GM12878 (cell line): ENCODE measurements at regions of chr15 and their contacts with region 1.

Region 1: DNA sequence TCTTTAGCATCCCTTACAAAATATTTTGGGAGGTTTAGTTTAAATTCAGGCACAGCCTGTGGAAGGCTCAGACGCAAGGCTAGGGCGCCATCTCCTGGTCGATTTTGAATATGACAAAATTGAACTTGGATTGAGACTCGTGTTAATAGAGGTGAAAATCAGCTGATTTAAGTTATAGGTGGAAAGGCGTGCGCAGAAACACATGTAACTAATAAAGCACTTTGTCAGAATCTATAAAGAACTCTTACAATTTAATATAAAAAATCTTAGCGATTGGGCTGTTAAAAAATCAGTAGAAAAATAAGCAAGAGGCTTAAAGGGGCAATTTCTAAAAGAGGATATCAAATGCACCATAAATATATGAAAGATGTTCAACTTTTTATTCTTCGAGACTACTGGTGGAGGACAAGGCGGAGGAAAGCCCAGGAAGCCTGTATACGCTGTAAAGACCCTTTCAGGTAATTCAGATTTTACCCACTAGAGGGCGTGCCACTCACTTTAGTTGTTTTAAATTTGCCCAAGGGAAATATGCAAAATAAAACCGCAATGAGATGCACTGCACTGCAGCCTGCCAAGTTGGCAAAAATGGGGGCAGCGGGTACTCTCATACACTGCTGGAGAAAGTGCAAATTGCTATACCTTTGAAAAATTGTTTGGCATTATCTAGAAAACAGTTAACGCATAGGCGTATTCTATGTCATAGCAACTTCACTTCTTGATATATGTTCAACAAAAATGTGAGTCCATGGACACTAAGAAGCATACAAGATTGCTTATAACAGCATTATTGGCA is 64.7 kb downstream of the SLC30A4 start:
- DNase-seq: peak; percentile 69
- ATAC-seq: peak; percentile 72
- H3K4me3 ChIP-seq: peak overlapping the region; percentile 69
- H3K27ac ChIP-seq: peak overlapping the region; percentile 30
- H3K4me1 ChIP-seq: peaks cover 24% of the 10 kb centered on the region
- H3K27me3 ChIP-seq: no peaks in the 10 kb centered on the region
- CTCF ChIP-seq: peak; percentile 57 to 87 (median 62); a peak in 5 of 6 replicates
- EP300 ChIP-seq: no peak
- POLR2A ChIP-seq: no peak
- RAD21 ChIP-seq: peak; percentile 95

Region 2: DNA sequence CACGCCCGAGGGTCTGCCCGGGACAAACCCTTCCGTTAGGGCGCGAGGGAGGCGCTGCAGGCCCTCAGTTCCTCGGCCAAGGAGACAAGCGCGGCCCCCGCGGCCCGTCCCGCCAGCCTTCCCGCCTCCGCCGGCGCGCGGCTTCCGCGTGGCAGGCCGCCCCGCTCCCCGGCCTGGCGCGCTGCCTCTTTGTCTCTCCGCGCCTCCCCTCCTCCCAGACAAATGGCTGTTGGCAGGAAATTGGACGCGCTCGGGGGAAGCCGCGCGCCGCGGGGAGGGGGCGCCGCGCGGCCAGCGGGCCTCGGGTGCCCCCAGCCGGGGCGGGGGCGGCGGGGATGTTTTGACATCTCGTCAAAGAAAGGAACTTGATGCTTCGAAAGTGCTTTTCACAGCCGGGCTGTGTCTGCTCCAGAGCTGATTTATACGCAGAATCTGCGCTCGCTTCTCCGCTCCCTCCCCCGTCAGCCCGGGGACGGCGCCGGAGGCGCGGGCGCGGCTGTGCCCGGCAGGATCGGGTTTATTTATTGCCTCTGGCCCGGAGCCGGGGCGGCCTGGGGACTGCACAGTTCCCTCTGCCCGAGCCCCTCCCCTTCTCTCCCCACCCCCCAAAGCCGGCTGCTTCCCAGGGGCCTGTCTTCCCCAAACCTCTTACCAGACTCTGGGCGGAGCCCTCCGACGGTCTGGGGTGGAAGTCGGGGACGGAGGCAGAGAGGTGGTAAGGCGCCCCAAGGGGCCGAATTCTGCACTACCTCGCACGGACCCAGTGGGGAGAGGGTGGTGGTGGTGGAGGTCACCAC is 290.8 kb before region 1 on chr15:
- CTCF ChIA-PET with region 1: interaction called, 34 read pairs
- POLR2A ChIA-PET with region 1: no interaction called
- RAD21 ChIA-PET with region 1: interaction called, 7 read pairs
- SMC1A ChIA-PET with region 1: interaction called, 22 read pairs
- in situ Hi-C with region 1: no loop called
- intact Hi-C with region 1: loop called (anchors 2 kb)
- DNase-seq: peak; percentile 51
- ATAC-seq: peak; percentile 95
- H3K4me3 ChIP-seq: peak overlapping the region; percentile 79
- H3K27ac ChIP-seq: peak overlapping the region; percentile 40
- H3K4me1 ChIP-seq: peaks cover 12% of the 10 kb centered on the region
- H3K27me3 ChIP-seq: no peaks in the 10 kb centered on the region
- CTCF ChIP-seq: peak; percentile 79 to 87 (median 83); a peak in 5 of 6 replicates
- EP300 ChIP-seq: no peak
- POLR2A ChIP-seq: peak; percentile 75
- RAD21 ChIP-seq: peak; percentile 41

Region 3: GRCh38 chr15:45230246-45230965 is 227.4 kb before region 1 on chr15:
- CTCF ChIA-PET with region 1: no interaction called
- POLR2A ChIA-PET with region 1: no interaction called
- RAD21 ChIA-PET with region 1: no interaction called
- SMC1A ChIA-PET with region 1: no interaction called
- in situ Hi-C with region 1: no loop called
- intact Hi-C with region 1: no loop called
- DNase-seq: no peak
- ATAC-seq: no peak
- H3K4me3 ChIP-seq: no peak overlapping the region
- H3K27ac ChIP-seq: no peak overlapping the region
- H3K4me1 ChIP-seq: no peaks in the 10 kb centered on the region
- H3K27me3 ChIP-seq: no peaks in the 10 kb centered on the region
- CTCF ChIP-seq: no peak
- EP300 ChIP-seq: no peak
- POLR2A ChIP-seq: no peak
- RAD21 ChIP-seq: no peak

Region 4: GRCh38 chr15:45253330-45253729 is 204.5 kb before region 1 on chr15:
- CTCF ChIA-PET with region 1: no interaction called
- POLR2A ChIA-PET with region 1: no interaction called
- RAD21 ChIA-PET with region 1: no interaction called
- SMC1A ChIA-PET with region 1: no interaction called
- in situ Hi-C with region 1: no loop called
- intact Hi-C with region 1: no loop called
- DNase-seq: no peak
- ATAC-seq: peak; percentile 59
- H3K4me3 ChIP-seq: no peak overlapping the region
- H3K27ac ChIP-seq: no peak overlapping the region
- H3K4me1 ChIP-seq: no peaks in the 10 kb centered on the region
- H3K27me3 ChIP-seq: no peaks in the 10 kb centered on the region
- CTCF ChIP-seq: 0 out of 6 replicates have a peak, but pooled peaks of 2 of the 3 experiments have one; percentile 17 to 26
- EP300 ChIP-seq: no peak
- POLR2A ChIP-seq: no peak
- RAD21 ChIP-seq: no peak

Region 5: GRCh38 chr15:45307230-45307924 is 150.5 kb before region 1 on chr15:
- CTCF ChIA-PET with region 1: interaction called, 8 read pairs
- POLR2A ChIA-PET with region 1: no interaction called
- RAD21 ChIA-PET with region 1: no interaction called
- SMC1A ChIA-PET with region 1: no interaction called
- in situ Hi-C with region 1: no loop called
- intact Hi-C with region 1: loop called (anchors 2 kb)
- DNase-seq: peak; percentile 31
- ATAC-seq: peak; percentile 71
- H3K4me3 ChIP-seq: peak overlapping the region; percentile 60; the same call in 1 of the 2 replicates
- H3K27ac ChIP-seq: no peak overlapping the region
- H3K4me1 ChIP-seq: no peaks in the 10 kb centered on the region
- H3K27me3 ChIP-seq: no peaks in the 10 kb centered on the region
- CTCF ChIP-seq: peak; percentile 39 to 65 (median 58); a peak in 5 of 6 replicates
- EP300 ChIP-seq: no peak
- POLR2A ChIP-seq: no peak
- RAD21 ChIP-seq: peak; percentile 58

Region 6: DNA sequence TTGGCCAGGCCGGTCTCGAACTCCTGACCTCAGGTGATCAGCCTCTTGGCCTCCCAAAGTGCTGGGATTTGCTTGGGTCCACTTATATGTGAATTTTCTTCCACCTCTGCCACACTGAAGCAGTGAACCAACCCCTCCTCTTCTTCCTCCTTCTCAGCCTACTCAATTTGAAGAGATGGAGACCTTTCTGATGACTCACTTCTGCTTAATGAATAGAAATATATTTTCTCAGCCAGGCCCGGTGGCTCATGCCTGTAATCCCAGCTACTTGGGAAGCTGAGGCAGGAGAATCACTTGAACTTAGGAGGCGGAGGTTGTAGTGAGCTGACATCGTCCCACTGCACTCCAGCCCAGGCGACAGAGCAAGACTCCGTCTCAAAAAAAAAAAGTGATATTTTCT is 32.7 kb before region 1 on chr15:
- CTCF ChIA-PET with region 1: interaction called, 194 read pairs
- POLR2A ChIA-PET with region 1: no interaction called
- RAD21 ChIA-PET with region 1: interaction called, 38 read pairs
- SMC1A ChIA-PET with region 1: interaction called, 30 read pairs
- in situ Hi-C with region 1: no loop called
- intact Hi-C with region 1: loop called (anchors 1 kb)
- DNase-seq: no peak
- ATAC-seq: no peak
- H3K4me3 ChIP-seq: no peak overlapping the region
- H3K27ac ChIP-seq: no peak overlapping the region
- H3K4me1 ChIP-seq: 0 out of 2 replicates have a peak, but pooled peaks cover 3% of the 10 kb centered on the region
- H3K27me3 ChIP-seq: no peaks in the 10 kb centered on the region
- CTCF ChIP-seq: no peak
- EP300 ChIP-seq: no peak
- POLR2A ChIP-seq: no peak
- RAD21 ChIP-seq: no peak

Region 7: GRCh38 chr15:45587095-45587860 is 129.4 kb after region 1 on chr15 and contains the start of gene BLOC1S6:
- CTCF ChIA-PET with region 1: interaction called, 37 read pairs
- POLR2A ChIA-PET with region 1: interaction called, 4 read pairs
- RAD21 ChIA-PET with region 1: interaction called, 11 read pairs
- SMC1A ChIA-PET with region 1: interaction called, 11 read pairs
- in situ Hi-C with region 1: no loop called
- intact Hi-C with region 1: no loop called
- DNase-seq: peak; percentile 74
- ATAC-seq: peak; percentile 93
- H3K4me3 ChIP-seq: peak within 1 kb of the TSS; percentile 97
- H3K27ac ChIP-seq: peak within 1 kb of the TSS; percentile 85
- H3K4me1 ChIP-seq: peaks cover 4% of the 10 kb centered on the region; the same call in 1 of the 2 replicates
- H3K27me3 ChIP-seq: no peaks in the 10 kb centered on the region
- CTCF ChIP-seq: no peak
- EP300 ChIP-seq: peak in 1 of 2 experiments; percentile 10; a peak in 1 of 4 replicates
- POLR2A ChIP-seq: peak; percentile 99
- RAD21 ChIP-seq: no peak
- polyA plus RNA-seq, gene BLOC1S6: 13.5 to 16.9 TPM

Region 8: DNA sequence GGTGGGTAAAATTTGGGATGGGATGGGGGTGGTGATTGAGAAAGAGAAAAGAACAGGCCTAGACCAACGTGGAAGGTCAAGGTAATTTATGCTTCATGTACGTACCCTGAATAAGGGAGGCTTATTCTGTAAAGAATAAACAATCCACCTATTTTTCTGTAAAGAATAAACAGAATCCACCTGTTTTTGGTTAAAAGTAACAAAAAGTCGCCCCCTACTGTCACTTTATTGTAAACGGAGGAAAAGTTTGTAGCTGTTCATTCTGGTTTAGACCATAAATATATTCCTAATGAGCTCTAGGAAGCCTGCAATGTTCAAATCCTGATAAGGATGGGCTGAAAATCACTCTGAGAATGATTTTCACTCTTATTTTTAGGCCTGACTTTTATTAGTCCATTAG is 153.5 kb after region 1 on chr15:
- CTCF ChIA-PET with region 1: interaction called, 245 read pairs
- POLR2A ChIA-PET with region 1: interaction called, 3 read pairs
- RAD21 ChIA-PET with region 1: interaction called, 83 read pairs
- SMC1A ChIA-PET with region 1: interaction called, 115 read pairs
- in situ Hi-C with region 1: loop called (anchors 5 kb)
- intact Hi-C with region 1: loop called (anchors 1 kb)
- DNase-seq: no peak
- ATAC-seq: peak; percentile 43; the same call in 1 of the 3 replicates
- H3K4me3 ChIP-seq: no peak overlapping the region
- H3K27ac ChIP-seq: no peak overlapping the region
- H3K4me1 ChIP-seq: no peaks in the 10 kb centered on the region; the same call in 1 of the 2 replicates
- H3K27me3 ChIP-seq: no peaks in the 10 kb centered on the region
- CTCF ChIP-seq: peak; percentile 42 to 53 (median 46); a peak in 5 of 6 replicates
- EP300 ChIP-seq: no peak
- POLR2A ChIP-seq: no peak
- RAD21 ChIP-seq: peak; percentile 61